ENCODE measurements at regions of chr12 and their contacts with region 1.

Region 1: GRCh38 chr12:6978609-6979011 is 7.9 kb downstream of the EMG1 start:
- DNase-seq: peak; percentile 73 to 74
- H3K4me3 ChIP-seq: no peak overlapping the region
- H3K4me3 Mint-ChIP-seq: peak overlapping the region; percentile 17
- H3K27ac Mint-ChIP-seq: peak overlapping the region; percentile 98
- H3K4me1 ChIP-seq: peaks cover 60% of the 10 kb centered on the region
- H3K4me1 Mint-ChIP-seq: peaks cover 71% of the 10 kb centered on the region
- H3K27me3 ChIP-seq: no peaks in the 10 kb centered on the region
- H3K27me3 Mint-ChIP-seq: no peaks in the 10 kb centered on the region
- CTCF ChIP-seq: peak in 1 of 2 experiments; percentile 16

Region 2: GRCh38 chr12:6764011-6764828 is 214.4 kb before region 1 on chr12:
- CTCF ChIA-PET with region 1: no interaction called
- POLR2A ChIA-PET with region 1: no interaction called
- intact Hi-C with region 1: no loop called
- DNase-seq: peak; percentile 89 to 95
- H3K4me3 ChIP-seq: peak overlapping the region; percentile 10; the same call in 1 of the 2 replicates
- H3K4me3 Mint-ChIP-seq: peak overlapping the region; percentile 71
- H3K27ac Mint-ChIP-seq: peak overlapping the region; percentile 79
- H3K4me1 ChIP-seq: peaks cover 54% of the 10 kb centered on the region
- H3K4me1 Mint-ChIP-seq: peaks cover 53% of the 10 kb centered on the region
- H3K27me3 ChIP-seq: no peaks in the 10 kb centered on the region
- H3K27me3 Mint-ChIP-seq: no peaks in the 10 kb centered on the region
- CTCF ChIP-seq: no peak

Region 3: GRCh38 chr12:6996040-6996441 is 17.4 kb after region 1 on chr12:
- CTCF ChIA-PET with region 1: interaction called, 10 read pairs
- POLR2A ChIA-PET with region 1: interaction called, 16 read pairs
- intact Hi-C with region 1: loop called (anchors 1 kb)
- DNase-seq: peak; percentile 91 to 96
- H3K4me3 ChIP-seq: no peak overlapping the region
- H3K4me3 Mint-ChIP-seq: peak overlapping the region; percentile 20
- H3K27ac Mint-ChIP-seq: peak overlapping the region; percentile 62
- H3K4me1 ChIP-seq: peaks cover 53% of the 10 kb centered on the region
- H3K4me1 Mint-ChIP-seq: peaks cover 36% of the 10 kb centered on the region
- H3K27me3 ChIP-seq: no peaks in the 10 kb centered on the region
- H3K27me3 Mint-ChIP-seq: no peaks in the 10 kb centered on the region
- CTCF ChIP-seq: no peak

Region 4: DNA sequence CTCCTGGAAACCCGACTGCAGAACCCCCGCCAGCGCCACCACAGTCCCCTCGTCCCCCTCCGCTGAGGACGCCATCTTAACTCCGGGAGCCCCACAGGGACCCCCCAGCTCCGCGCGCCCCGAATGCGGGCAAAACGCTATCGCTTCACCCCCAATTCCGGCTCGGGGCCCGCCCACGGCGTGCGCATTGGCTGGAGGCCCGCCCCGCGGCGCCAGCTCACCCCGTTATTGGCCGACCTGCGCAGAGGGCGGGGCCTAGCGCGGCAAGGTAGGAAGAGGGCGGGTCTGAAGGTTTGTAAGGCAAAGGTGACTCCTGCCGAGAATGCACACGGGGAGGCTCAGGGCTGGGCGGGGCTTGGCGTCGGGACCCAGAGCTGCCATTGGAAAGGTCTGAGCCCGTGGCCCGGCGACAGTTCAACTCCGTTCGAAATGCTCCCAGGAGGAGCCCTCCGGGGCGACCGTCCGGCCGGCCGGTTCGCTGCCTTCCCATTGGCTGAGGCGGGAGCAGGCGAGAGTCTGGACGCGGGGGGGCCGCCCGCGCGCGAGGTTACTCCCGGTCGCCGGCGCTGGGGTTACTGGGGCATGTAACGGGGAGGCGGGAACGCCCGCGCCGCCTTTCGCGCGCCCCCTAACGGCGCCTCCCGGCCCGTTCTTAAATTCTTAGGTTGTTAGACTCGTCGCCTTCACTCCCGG is 39.9 kb after region 1 on chr12 and contains the start of gene LPCAT3:
- CTCF ChIA-PET with region 1: interaction called, 13 read pairs
- POLR2A ChIA-PET with region 1: interaction called, 20 read pairs
- intact Hi-C with region 1: loop called (anchors 1 kb)
- DNase-seq: peak; percentile 99 to 100
- H3K4me3 ChIP-seq: peak within 1 kb of the TSS; percentile 65
- H3K4me3 Mint-ChIP-seq: peak within 1 kb of the TSS; percentile 88
- H3K27ac Mint-ChIP-seq: peak within 1 kb of the TSS; percentile 72
- H3K4me1 ChIP-seq: peaks cover 19% of the 10 kb centered on the region
- H3K4me1 Mint-ChIP-seq: peaks cover 22% of the 10 kb centered on the region
- H3K27me3 ChIP-seq: no peaks in the 10 kb centered on the region
- H3K27me3 Mint-ChIP-seq: no peaks in the 10 kb centered on the region
- CTCF ChIP-seq: peak; percentile 95 to 96
- total RNA-seq, gene LPCAT3: 142 and 155 TPM in 2 replicates

Region 5: GRCh38 chr12:7042842-7043241 is 64.2 kb after region 1 on chr12:
- CTCF ChIA-PET with region 1: no interaction called
- POLR2A ChIA-PET with region 1: no interaction called
- intact Hi-C with region 1: loop called (anchors 1 kb)
- DNase-seq: peak in 1 of 2 experiments; percentile 62
- H3K4me3 ChIP-seq: no peak overlapping the region
- H3K4me3 Mint-ChIP-seq: no peak overlapping the region
- H3K27ac Mint-ChIP-seq: no peak overlapping the region
- H3K4me1 ChIP-seq: no peaks in the 10 kb centered on the region
- H3K4me1 Mint-ChIP-seq: peaks cover 7% of the 10 kb centered on the region
- H3K27me3 ChIP-seq: no peaks in the 10 kb centered on the region
- H3K27me3 Mint-ChIP-seq: no peaks in the 10 kb centered on the region
- CTCF ChIP-seq: peak; percentile 49 to 63

Measured in Caco-2 (cell line).